Left cardiac atrium (tissue), 4 donors: ENCODE measurements at regions of chr7 and their contacts with region 1.

Region 1: GRCh38 chr7:26376175-26376917 is 84.7 kb downstream of the SNX10 start:
- DNase-seq: no peak
- ATAC-seq: peak; percentile 51 to 66

Region 2: GRCh38 chr7:26413012-26413691 is 36.8 kb after region 1 on chr7:
- intact Hi-C with region 1: no loop called
- DNase-seq: no peak
- ATAC-seq: no peak

Region 3: GRCh38 chr7:26500749-26501352 is 124.5 kb after region 1 on chr7:
- intact Hi-C with region 1: loop called in 1 of 2 experiments (anchors 10 kb)
- DNase-seq: no peak
- ATAC-seq: no peak